Activated CD4-positive, alpha-beta memory T cell treated with anti-CD3 and anti-CD28 coated beads, Interleukin-2, amount 10 ng/mL, durations not matched to agents 7 days and 5 days (primary cell): ENCODE measurements at regions of chr9 and their contacts with region 1.

Region 1: DNA sequence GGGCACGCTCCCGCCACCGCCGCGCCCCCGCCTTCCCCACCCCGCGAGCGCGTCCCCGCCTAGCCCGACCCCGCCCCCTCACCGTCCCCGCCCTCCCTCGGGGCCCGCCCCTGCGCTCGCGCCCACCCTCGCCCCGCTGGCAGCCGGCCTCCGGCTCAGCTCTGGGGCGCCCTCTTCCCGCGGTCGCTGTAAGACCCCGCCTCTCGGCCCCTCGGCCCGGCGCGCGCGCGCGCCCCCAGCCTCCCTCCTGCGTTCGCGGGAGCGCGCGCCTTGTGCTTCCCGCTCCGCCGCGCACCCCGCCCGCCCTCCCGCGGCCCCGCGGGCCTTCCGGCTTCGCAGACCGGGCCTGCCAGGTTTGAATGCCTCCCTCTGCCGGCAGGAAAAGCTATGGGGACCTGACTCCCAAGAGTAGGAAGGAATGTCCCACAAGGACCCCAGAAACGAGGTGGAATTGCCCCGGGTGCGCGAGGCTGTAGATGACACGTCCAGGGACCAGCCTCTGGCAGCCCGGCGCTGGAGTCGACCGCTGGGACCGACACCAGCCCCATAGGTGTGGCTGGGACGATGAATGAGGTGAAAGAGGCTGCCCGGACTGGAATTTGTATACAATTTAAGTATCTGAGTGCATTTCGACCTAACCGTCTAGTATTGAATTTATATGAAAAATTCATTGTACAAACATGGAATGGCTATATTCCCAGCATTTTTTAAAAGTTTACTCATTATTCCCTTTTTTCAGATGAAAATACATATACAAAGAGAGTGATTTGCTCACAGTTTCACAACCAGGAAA is 416 bp upstream of the PTBP3 start:
- DNase-seq: peak; percentile 95
- H3K4me3 Mint-ChIP-seq: peak overlapping the region; percentile 88
- H3K27ac Mint-ChIP-seq: peak overlapping the region; percentile 87
- H3K4me1 Mint-ChIP-seq: peaks cover 34% of the 10 kb centered on the region
- H3K27me3 Mint-ChIP-seq: no peaks in the 10 kb centered on the region

Region 2: GRCh38 chr9:112097712-112098688 is 235.8 kb before region 1 on chr9:
- CTCF ChIA-PET with region 1: interaction called, 16 read pairs
- POLR2A ChIA-PET with region 1: interaction called, 10 read pairs
- DNase-seq: peak; percentile 74
- H3K4me3 Mint-ChIP-seq: no peak overlapping the region
- H3K27ac Mint-ChIP-seq: no peak overlapping the region
- H3K4me1 Mint-ChIP-seq: peaks cover 37% of the 10 kb centered on the region
- H3K27me3 Mint-ChIP-seq: no peaks in the 10 kb centered on the region

Region 3: GRCh38 chr9:112157087-112157486 is 176.7 kb before region 1 on chr9:
- CTCF ChIA-PET with region 1: no interaction called
- POLR2A ChIA-PET with region 1: no interaction called
- DNase-seq: no peak
- H3K4me3 Mint-ChIP-seq: no peak overlapping the region
- H3K27ac Mint-ChIP-seq: no peak overlapping the region
- H3K4me1 Mint-ChIP-seq: peaks cover 2% of the 10 kb centered on the region
- H3K27me3 Mint-ChIP-seq: no peaks in the 10 kb centered on the region

Region 4: GRCh38 chr9:112174218-112174964 is 159.4 kb before region 1 on chr9:
- CTCF ChIA-PET with region 1: interaction called, 3 read pairs
- POLR2A ChIA-PET with region 1: interaction called, 49 read pairs
- DNase-seq: peak; percentile 89
- H3K4me3 Mint-ChIP-seq: peak overlapping the region; percentile 86
- H3K27ac Mint-ChIP-seq: peak overlapping the region; percentile 98
- H3K4me1 Mint-ChIP-seq: peaks cover 82% of the 10 kb centered on the region
- H3K27me3 Mint-ChIP-seq: peaks cover 7% of the 10 kb centered on the region

Region 5: GRCh38 chr9:112180387-112180881 is 153.4 kb before region 1 on chr9:
- CTCF ChIA-PET with region 1: interaction called, 3 read pairs
- POLR2A ChIA-PET with region 1: interaction called, 49 read pairs
- DNase-seq: peak; percentile 75
- H3K4me3 Mint-ChIP-seq: peak overlapping the region; percentile 25
- H3K27ac Mint-ChIP-seq: peak overlapping the region; percentile 84
- H3K4me1 Mint-ChIP-seq: peaks cover 64% of the 10 kb centered on the region
- H3K27me3 Mint-ChIP-seq: peaks cover 9% of the 10 kb centered on the region

Region 6: GRCh38 chr9:112218908-112219307 is 114.9 kb before region 1 on chr9:
- CTCF ChIA-PET with region 1: interaction called, 4 read pairs
- POLR2A ChIA-PET with region 1: interaction called, 17 read pairs
- DNase-seq: peak; percentile 21
- H3K4me3 Mint-ChIP-seq: peak overlapping the region; percentile 25
- H3K27ac Mint-ChIP-seq: peak overlapping the region; percentile 61
- H3K4me1 Mint-ChIP-seq: peaks cover 34% of the 10 kb centered on the region
- H3K27me3 Mint-ChIP-seq: no peaks in the 10 kb centered on the region

Region 7: DNA sequence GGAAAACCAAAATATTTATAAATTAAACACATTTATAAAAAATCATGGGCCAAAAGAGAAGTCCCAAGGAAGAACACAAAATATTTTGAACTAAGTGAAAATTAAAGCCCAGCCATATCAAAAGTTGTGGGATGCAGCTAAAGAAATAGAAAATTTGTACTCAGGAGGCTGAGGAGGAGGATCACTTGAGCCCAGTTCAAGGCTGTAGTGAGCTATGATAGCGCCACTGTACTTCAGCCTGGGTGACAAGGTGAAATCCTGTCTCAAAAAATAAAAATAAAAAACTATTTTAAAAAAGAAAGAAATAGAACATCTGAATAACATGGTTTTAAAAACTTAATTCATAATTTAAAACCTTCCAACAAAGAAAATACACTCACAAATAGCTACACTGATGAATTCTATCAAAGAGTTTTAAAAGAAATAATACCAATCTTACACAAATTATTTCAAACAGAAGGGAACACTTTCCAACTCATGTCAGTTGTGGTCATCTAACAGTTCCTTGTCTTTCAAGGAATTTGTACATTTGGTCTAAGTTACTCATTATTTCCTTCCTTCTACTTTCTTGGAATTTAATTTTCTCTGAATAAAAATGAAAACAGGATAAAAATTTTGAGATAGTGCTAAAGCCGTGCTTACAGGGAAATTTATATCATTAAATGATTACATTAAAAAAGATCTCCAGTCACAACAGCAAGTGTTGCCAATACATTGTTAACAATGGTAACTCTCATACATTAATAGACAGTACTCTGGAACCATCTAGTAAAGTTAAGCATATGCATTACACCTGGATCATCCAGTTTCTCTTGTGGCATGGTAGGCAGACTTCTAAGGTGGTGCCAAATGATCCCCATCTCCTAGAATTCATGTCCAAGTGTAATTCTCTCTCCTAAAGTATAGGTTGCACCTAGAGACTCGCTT is 18.2 kb before region 1 on chr9:
- CTCF ChIA-PET with region 1: interaction called, 7 read pairs
- POLR2A ChIA-PET with region 1: interaction called, 90 read pairs
- DNase-seq: no peak
- H3K4me3 Mint-ChIP-seq: peak overlapping the region; percentile 42
- H3K27ac Mint-ChIP-seq: peak overlapping the region; percentile 81
- H3K4me1 Mint-ChIP-seq: peaks cover 70% of the 10 kb centered on the region
- H3K27me3 Mint-ChIP-seq: no peaks in the 10 kb centered on the region

Region 8: GRCh38 chr9:112361601-112362000 is 27.8 kb after region 1 on chr9:
- CTCF ChIA-PET with region 1: interaction called, 11 read pairs
- POLR2A ChIA-PET with region 1: interaction called, 5 read pairs
- DNase-seq: no peak
- H3K4me3 Mint-ChIP-seq: no peak overlapping the region
- H3K27ac Mint-ChIP-seq: no peak overlapping the region
- H3K4me1 Mint-ChIP-seq: peaks cover 8% of the 10 kb centered on the region
- H3K27me3 Mint-ChIP-seq: peaks cover 9% of the 10 kb centered on the region

Region 9: DNA sequence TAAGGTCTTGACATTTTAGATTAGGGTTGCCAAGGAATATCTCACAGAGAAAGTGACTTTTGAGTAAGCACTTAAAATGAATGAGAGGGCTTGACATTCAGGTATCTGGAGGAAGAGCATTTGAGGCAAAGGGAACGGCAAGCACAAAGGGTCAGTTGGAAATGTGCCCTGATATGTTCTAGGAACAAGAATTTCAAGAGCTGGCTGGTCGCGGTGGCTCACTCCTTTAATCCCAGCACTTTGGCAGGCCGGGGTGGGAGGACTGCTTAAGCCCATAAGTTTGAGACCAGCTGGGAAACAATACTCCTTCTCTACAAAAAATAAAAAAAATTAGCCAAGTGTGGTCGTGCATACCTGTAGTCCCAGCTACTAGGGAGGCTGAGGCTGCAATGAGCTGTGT is 169.3 kb after region 1 on chr9:
- CTCF ChIA-PET with region 1: no interaction called
- POLR2A ChIA-PET with region 1: no interaction called
- DNase-seq: no peak
- H3K4me3 Mint-ChIP-seq: no peak overlapping the region
- H3K27ac Mint-ChIP-seq: no peak overlapping the region
- H3K4me1 Mint-ChIP-seq: no peaks in the 10 kb centered on the region
- H3K27me3 Mint-ChIP-seq: no peaks in the 10 kb centered on the region